AG04449 (cell line): ENCODE measurements at regions of chrX and their contacts with region 1.

Region 1: GRCh38 chrX:153953342-153953830 is 8.9 kb upstream of the RENBP start:
- DNase-seq: no peak
- H3K4me3 ChIP-seq: no peak overlapping the region
- CTCF ChIP-seq: peak; percentile 88

Region 2: DNA sequence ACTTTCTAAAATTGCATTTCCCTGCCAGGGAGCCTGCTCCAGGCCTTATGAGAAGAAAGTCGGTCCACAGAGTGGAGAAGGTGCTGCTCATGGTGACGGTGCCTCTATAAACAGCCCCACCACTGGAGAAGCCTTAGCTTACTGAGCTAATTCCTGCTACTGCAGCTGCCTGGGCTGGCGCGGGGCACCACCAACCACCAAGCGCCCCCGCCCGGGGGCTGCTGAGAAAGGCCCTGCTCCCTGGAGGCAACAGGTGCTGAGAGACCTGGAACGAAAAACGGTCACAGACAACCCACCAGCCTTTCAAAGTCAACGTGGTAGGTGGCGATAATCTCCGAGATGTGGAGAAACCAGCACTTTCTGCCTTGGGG is 15.4 kb after region 1 on chrX:
- CTCF ChIA-PET with region 1: interaction called, 99 read pairs
- POLR2A ChIA-PET with region 1: interaction called, 4 read pairs
- DNase-seq: no peak
- H3K4me3 ChIP-seq: peak overlapping the region; percentile 83
- CTCF ChIP-seq: no peak